ENCODE measurements at regions of chr10 and their contacts with region 1.

Region 1: GRCh38 chr10:7872041-7872442 is 53.7 kb downstream of the TAF3 start:
- DNase-seq: no peak
- H3K4me3 Mint-ChIP-seq: peak overlapping the region; percentile 89
- H3K27ac Mint-ChIP-seq: peak overlapping the region; percentile 64
- H3K4me1 Mint-ChIP-seq: peaks cover 13% of the 10 kb centered on the region
- H3K27me3 Mint-ChIP-seq: no peaks in the 10 kb centered on the region

Region 2: GRCh38 chr10:7756360-7756992 is 115.6 kb before region 1 on chr10:
- intact Hi-C with region 1: no loop called
- DNase-seq: no peak
- H3K4me3 Mint-ChIP-seq: no peak overlapping the region
- H3K27ac Mint-ChIP-seq: no peak overlapping the region
- H3K4me1 Mint-ChIP-seq: no peaks in the 10 kb centered on the region
- H3K27me3 Mint-ChIP-seq: no peaks in the 10 kb centered on the region

Region 3: DNA sequence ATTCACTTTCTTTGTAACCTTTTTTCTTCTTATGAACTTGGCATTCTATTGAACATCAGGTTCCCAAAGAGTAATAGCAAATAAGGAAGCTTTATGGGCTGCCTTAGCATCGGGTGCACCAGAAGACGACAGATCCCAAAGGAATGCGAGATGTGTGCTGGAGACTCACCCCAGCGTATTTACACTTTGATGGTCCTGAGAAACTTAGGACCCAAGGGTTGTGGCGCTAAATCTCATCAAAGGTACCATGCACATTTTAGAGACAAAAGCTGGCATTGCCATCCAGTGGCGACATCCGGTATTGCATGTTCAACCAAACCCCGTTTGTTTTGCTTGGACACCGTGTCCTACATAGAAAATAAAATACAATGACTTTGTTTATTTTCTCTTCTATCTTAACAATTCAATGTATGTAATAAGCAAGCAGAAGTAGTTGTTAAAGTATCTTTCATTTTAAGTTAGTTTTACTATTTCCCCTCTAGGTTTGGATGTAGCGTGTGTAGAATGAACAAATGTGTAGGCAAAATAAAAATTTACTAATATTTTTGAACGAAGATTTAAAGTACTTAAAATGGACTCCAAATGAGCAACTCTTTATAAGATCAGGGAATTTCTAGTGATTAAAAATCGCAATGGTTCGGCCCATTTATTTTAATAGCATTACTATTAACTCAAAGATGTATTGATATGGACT is 1337.2 kb after region 1 on chr10:
- intact Hi-C with region 1: loop called (anchors 5 kb)
- DNase-seq: peak; percentile 60
- H3K4me3 Mint-ChIP-seq: no peak overlapping the region
- H3K27ac Mint-ChIP-seq: peak overlapping the region; percentile 61
- H3K4me1 Mint-ChIP-seq: peaks cover 16% of the 10 kb centered on the region
- H3K27me3 Mint-ChIP-seq: no peaks in the 10 kb centered on the region

Measured in activated T-helper 2 cell treated with anti-CD3 and anti-CD28 coated beads, Interferon-gamma antibody, Interleukin-2, Interleukin-4, amounts not matched to agents 10 μg/mL and 5 μg/mL and 100 μg/mL, durations not matched to agents 14 hours and 24 hours and 36 hours (primary cell).